Left cardiac atrium (tissue), 4 donors: ENCODE measurements at regions of chr1 and their contacts with region 1.

Region 1: GRCh38 chr1:44008259-44008658 is 16.9 kb downstream of the CCDC24 start:
- DNase-seq: no peak
- ATAC-seq: no peak

Region 2: DNA sequence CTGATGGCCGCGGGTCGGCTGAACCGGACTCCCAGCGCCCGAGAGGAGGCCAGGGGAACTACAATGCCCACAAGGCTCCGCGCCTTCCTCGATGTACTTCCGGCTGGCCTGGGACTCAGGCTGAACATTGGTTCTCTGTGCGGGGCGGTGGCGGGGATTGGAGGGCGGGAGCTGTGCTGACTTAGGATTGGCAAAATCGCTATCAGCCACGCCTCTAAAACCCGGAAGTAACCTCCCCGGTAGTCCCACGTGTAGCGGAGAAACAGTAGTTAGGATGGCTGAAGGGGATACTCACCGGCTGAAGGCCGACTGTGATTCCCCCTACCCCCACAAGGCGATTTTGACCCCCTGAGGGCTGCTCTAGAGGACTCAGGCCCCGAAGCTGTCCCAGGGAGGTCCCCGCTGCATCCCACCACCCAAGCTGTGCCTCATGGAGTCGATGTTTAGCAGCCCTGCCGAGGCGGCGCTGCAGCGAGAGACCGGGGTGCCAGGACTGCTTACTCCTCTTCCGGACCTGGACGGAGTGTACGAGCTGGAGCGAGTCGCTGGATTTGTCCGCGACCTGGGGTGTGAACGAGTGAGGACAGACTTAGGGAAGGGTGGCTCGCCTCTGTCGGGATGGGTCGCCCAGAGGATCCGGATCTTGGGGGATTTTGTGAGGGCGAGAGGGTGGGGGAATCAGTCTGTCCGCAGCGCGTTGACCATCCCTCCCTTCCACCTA is 38.4 kb before region 1 on chr1 and contains the start of gene DPH2:
- intact Hi-C with region 1: no loop called
- DNase-seq: peak; percentile 98
- ATAC-seq: peak; percentile 93 to 95
- total RNA-seq, gene DPH2: 14.1 to 20.9 TPM

Region 3: GRCh38 chr1:44044071-44044801 is 36.0 kb after region 1 on chr1:
- intact Hi-C with region 1: loop called (anchors 5 kb)
- DNase-seq: no peak
- ATAC-seq: no peak

Region 4: GRCh38 chr1:44049839-44050238 is 41.6 kb after region 1 on chr1:
- intact Hi-C with region 1: loop called in 1 of 2 experiments (anchors 5 kb)
- DNase-seq: no peak
- ATAC-seq: peak in 1 of 2 donors; percentile 67